ENCODE measurements at regions of chr5 and their contacts with region 1.

Region 1: GRCh38 chr5:126536874-126537273 is 58.1 kb downstream of the ALDH7A1 start:
- DNase-seq: no peak
- H3K4me3 ChIP-seq: no peak overlapping the region
- H3K27ac ChIP-seq: peak overlapping the region in 1 of 5 donors; percentile 8
- H3K4me1 ChIP-seq: peaks cover 6 to 23% (median 10%) of the 10 kb centered on the region in 4 donors
- H3K27me3 ChIP-seq: no peaks in the 10 kb centered on the region
- CTCF ChIP-seq: no peak
- EP300 ChIP-seq: no peak
- POLR2A ChIP-seq: no peak

Region 2: DNA sequence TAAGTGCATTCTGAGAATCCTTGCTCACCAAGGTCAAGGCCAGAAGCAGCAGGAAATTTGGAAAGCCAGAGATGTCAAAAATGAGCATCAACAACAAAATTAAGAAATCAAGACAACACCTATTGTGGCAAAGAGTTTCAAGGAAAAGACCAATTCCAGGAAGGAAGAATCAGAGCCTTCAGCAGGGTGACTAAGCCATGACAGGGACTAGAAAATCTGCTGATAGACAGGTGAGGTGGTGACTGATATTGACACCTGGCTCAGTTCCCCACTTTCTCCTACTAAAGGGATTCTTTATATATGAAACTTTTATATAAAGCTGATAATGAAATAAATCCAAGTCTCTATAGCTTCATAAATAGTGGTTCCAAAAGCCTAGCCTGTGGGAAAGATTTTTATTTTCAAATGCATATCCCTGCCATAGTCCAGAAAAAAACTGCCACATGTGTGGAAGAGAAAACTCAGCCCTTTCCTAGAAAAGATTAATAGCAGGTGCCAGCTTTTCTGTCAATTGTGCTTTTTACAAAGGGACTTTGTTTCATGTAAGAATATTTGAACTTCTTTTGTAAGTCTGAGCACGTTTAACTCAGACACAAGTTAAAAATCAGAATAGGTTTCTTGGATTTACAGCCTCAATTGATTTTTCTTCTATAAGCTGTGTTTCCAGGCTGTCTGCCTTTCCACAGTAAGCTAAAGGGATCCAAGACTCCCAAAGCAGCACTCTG is 194.8 kb before region 1 on chr5:
- intact Hi-C with region 1: loop called (anchors 5 kb)
- DNase-seq: no peak
- H3K4me3 ChIP-seq: no peak overlapping the region
- H3K27ac ChIP-seq: no peak overlapping the region
- H3K4me1 ChIP-seq: no peaks in the 10 kb centered on the region
- H3K27me3 ChIP-seq: no peaks in the 10 kb centered on the region
- CTCF ChIP-seq: no peak
- EP300 ChIP-seq: no peak
- POLR2A ChIP-seq: no peak

Region 3: GRCh38 chr5:126358525-126358924 is 178.3 kb before region 1 on chr5:
- intact Hi-C with region 1: loop called (anchors 5 kb)
- DNase-seq: no peak
- H3K4me3 ChIP-seq: no peak overlapping the region
- H3K27ac ChIP-seq: no peak overlapping the region
- H3K4me1 ChIP-seq: peaks cover 6 to 20% (median 9%) of the 10 kb centered on the region in 4 donors
- H3K27me3 ChIP-seq: no peaks in the 10 kb centered on the region
- CTCF ChIP-seq: no peak
- EP300 ChIP-seq: no peak
- POLR2A ChIP-seq: no peak

Region 4: DNA sequence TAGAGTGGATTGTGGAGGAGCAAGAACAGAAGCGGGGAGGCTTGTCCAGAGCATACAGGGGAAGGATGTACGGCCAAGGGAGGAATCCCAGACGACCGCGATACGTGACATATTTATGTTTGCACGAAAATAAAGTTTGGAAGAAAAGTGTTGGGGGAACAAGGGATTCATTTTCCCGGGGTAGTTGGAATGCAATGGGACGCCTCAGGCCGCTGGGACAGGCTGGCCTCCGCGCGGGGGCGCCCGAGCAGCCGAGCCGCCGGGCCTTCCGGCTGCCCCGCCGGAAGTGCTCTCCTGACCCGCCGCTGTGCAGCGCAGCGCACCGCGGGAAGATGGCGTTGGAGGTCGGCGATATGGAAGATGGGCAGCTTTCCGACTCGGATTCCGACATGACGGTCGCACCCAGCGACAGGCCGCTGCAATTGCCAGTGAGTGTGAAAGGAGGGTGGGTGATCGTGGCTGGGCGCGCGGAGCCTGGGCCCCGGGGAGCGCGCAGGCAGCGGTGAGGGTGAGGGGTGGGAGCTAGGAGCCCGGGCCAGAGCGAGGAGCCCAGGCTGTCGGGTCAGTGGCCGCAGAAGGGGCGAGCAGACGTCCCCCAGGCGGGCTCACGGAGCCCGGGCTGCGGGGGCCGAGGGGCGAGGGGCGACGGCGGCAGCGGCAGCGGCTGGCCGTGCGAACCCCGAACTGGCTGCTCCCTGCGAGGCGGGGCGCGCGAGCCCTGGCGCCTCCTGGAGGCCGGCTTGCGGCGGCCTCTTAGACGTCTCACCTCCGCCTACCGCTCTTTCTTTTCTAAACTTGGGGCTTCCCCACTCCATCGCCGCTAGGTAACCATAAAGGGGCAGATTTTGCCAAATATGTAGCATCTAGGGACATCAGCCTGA is 64.0 kb after region 1 on chr5 and contains the start of gene PHAX:
- intact Hi-C with region 1: no loop called
- DNase-seq: peak; percentile 79 to 96
- H3K4me3 ChIP-seq: peak within 1 kb of the TSS; percentile 74 to 100 (median 88)
- H3K27ac ChIP-seq: peak within 1 kb of the TSS; percentile 81 to 92 (median 90)
- H3K4me1 ChIP-seq: peaks cover 18 to 52% (median 49%) of the 10 kb centered on the region in 4 donors
- H3K27me3 ChIP-seq: no peaks in the 10 kb centered on the region
- CTCF ChIP-seq: peak in 5 of 7 experiments; percentile 28 to 66 (median 54)
- EP300 ChIP-seq: no peak
- POLR2A ChIP-seq: no peak
- total RNA-seq, gene PHAX: 26.6 to 246 (median 61.1) TPM